ENCODE measurements at regions of chr5 and their contacts with region 1.

Region 1: DNA sequence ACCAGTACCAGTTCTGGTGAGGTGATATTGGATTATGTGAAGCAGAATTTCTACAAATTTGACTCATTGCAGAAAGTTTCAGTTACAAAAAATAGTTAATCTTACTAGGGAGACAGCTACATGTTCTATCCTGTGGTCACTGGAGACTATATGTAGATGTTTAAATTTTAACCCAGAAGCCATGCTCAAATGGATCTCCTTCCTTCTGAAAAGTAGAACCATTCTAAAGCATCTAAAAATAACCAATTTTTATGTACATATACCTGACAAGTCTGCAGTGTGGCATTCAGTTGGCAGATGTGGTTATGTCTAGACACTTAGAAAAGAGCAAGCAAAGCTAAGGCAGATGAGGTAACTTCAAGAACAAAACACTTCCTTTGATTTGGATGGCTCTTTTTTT is 65.5 kb upstream of the POU4F3 start:
- H3K4me3 Mint-ChIP-seq: no peak overlapping the region
- H3K27ac Mint-ChIP-seq: no peak overlapping the region
- H3K4me1 Mint-ChIP-seq: no peaks in the 10 kb centered on the region
- H3K27me3 Mint-ChIP-seq: no peaks in the 10 kb centered on the region

Region 2: DNA sequence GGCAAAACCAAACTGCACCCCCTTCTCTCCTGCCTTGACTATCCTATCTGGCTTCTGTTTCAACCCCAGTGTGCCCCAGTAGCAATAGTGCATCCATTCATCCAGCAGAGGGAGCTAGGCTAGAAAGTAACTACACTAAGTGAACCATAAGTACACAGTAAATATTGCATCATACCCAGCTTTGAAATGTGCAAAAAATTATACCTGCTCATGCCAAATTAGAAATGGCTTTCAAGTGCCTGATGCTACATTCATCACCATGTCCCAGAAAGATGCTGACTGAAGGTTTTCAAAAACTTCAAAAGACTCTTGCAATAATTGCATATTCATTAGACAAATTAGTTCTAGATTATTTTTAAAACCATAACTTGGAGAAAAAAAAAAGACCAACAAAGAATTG is 591.4 kb before region 1 on chr5:
- intact Hi-C with region 1: no loop called
- H3K4me3 Mint-ChIP-seq: no peak overlapping the region
- H3K27ac Mint-ChIP-seq: no peak overlapping the region
- H3K4me1 Mint-ChIP-seq: peaks cover 27% of the 10 kb centered on the region
- H3K27me3 Mint-ChIP-seq: no peaks in the 10 kb centered on the region

Region 3: DNA sequence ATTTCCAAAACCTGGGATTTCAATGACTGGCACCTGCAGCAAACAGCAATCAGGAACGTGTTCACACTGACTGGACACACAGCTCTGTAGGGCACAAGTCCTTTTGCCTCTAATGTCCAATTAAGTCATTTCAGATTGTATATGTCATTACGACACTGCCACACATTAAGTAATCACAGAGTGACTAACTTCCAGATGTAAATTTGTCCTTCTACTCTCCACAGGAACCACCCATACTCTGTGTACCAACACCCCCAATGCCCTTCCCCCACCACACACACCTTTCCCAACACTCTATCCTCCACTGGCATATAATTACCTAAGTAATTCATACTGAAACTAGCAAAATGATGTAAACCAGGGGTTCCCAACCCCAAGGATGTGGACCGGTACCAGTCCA is 121.1 kb before region 1 on chr5:
- intact Hi-C with region 1: loop called (anchors 5 kb)
- H3K4me3 Mint-ChIP-seq: no peak overlapping the region
- H3K27ac Mint-ChIP-seq: no peak overlapping the region
- H3K4me1 Mint-ChIP-seq: no peaks in the 10 kb centered on the region
- H3K27me3 Mint-ChIP-seq: no peaks in the 10 kb centered on the region

Region 4: DNA sequence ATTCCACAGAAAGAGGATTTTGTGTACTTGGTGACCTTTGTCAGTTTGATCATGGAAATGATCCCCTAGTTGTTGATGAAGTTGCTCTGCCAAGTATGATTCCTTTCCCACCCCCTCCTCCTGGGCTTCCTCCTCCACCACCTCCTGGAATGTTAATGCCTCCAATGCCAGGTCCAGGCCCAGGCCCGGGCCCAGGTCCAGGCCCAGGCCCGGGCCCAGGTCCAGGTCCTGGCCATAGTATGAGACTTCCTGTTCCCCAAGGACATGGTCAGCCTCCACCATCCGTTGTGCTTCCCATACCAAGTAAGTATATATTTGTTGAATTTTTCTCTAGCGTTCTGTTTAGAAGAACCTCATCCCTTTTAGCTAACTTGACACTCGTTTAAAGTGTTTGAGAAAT is 39.7 kb before region 1 on chr5:
- intact Hi-C with region 1: loop called (anchors 5 kb)
- H3K4me3 Mint-ChIP-seq: no peak overlapping the region
- H3K27ac Mint-ChIP-seq: no peak overlapping the region
- H3K4me1 Mint-ChIP-seq: no peaks in the 10 kb centered on the region
- H3K27me3 Mint-ChIP-seq: no peaks in the 10 kb centered on the region